OCI-LY7 (cell line): ENCODE measurements at regions of chr3 and their contacts with region 1.

Region 1: GRCh38 chr3:152193673-152194267 is 75.0 kb upstream of the MBNL1 start:
- DNase-seq: peak; percentile 32
- H3K4me3 ChIP-seq: peak overlapping the region; percentile 64
- H3K27ac ChIP-seq: no peak overlapping the region
- H3K4me1 ChIP-seq: peaks cover 42% of the 10 kb centered on the region
- CTCF ChIP-seq: no peak

Region 2: DNA sequence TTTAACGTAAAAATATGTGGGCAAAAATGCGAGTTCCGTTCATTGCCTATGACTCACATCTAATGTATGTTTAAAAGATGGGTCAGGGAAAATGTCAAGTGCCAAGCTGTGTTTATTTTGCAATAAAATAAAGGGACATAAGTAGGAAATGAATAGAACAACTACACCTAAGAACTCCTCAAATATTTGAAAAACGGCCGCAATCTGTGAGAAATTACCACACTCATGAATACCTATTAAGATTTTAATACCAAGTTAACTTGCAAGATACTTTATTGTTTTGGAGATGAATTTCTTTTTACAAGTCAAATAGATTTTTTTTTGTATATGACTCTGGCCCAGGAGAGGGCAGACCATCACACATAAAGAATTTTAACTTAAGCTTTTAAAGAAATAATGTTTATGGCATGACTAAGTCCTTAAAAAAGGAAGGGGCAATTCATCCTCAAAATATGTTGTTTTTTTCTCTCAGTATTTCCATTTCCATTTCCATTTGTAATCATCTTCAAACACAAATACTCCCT is 167.7 kb before region 1 on chr3:
- CTCF ChIA-PET with region 1: no interaction called
- POLR2A ChIA-PET with region 1: no interaction called
- intact Hi-C with region 1: no loop called
- DNase-seq: no peak
- H3K4me3 ChIP-seq: no peak overlapping the region
- H3K27ac ChIP-seq: no peak overlapping the region
- H3K4me1 ChIP-seq: no peaks in the 10 kb centered on the region
- CTCF ChIP-seq: peak; percentile 35; the same call in 1 of the 2 replicates

Region 3: DNA sequence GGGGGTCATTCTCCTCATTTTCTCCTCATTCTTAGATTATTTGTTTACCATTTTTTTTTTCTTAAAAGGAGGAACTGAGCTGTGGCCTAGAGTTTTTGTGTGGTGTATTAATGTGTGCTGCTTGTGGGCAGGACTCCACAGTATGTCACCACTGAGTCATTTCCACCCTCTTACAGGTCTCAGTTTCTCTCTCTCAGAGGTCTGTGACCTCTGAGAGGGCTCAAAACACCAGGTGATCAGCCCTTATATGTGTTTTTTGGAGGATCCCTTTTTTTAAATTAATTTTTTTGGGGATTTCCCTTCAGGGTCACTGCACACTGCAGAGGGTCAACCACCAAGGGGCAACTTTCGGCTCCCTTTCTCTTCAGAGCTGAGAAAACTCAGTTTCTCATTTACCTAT is 153.9 kb before region 1 on chr3:
- CTCF ChIA-PET with region 1: no interaction called
- POLR2A ChIA-PET with region 1: no interaction called
- intact Hi-C with region 1: no loop called
- DNase-seq: no peak
- H3K4me3 ChIP-seq: no peak overlapping the region
- H3K27ac ChIP-seq: no peak overlapping the region
- H3K4me1 ChIP-seq: no peaks in the 10 kb centered on the region
- CTCF ChIP-seq: no peak

Region 4: GRCh38 chr3:152258448-152259393 is 65.0 kb after region 1 on chr3:
- CTCF ChIA-PET with region 1: no interaction called
- POLR2A ChIA-PET with region 1: interaction called, 23 read pairs
- intact Hi-C with region 1: no loop called
- DNase-seq: no peak
- H3K4me3 ChIP-seq: no peak overlapping the region
- H3K27ac ChIP-seq: no peak overlapping the region
- H3K4me1 ChIP-seq: peaks cover 59% of the 10 kb centered on the region
- CTCF ChIP-seq: no peak

Region 5: GRCh38 chr3:152589644-152590043 is 395.9 kb after region 1 on chr3:
- CTCF ChIA-PET with region 1: no interaction called
- POLR2A ChIA-PET with region 1: no interaction called
- intact Hi-C with region 1: no loop called
- DNase-seq: no peak
- H3K4me3 ChIP-seq: no peak overlapping the region
- H3K27ac ChIP-seq: no peak overlapping the region
- H3K4me1 ChIP-seq: no peaks in the 10 kb centered on the region
- CTCF ChIP-seq: no peak